ENCODE measurements at regions of chr1 and their contacts with region 1.

Region 1: GRCh38 chr1:167442124-167442848 is 76.0 kb downstream of the CD247 start:
- DNase-seq: peak; percentile 92 to 93
- H3K4me3 ChIP-seq: no peak overlapping the region
- H3K4me3 Mint-ChIP-seq: no peak overlapping the region
- H3K27ac Mint-ChIP-seq: no peak overlapping the region
- H3K4me1 ChIP-seq: no peaks in the 10 kb centered on the region
- H3K4me1 Mint-ChIP-seq: no peaks in the 10 kb centered on the region
- H3K27me3 ChIP-seq: no peaks in the 10 kb centered on the region
- H3K27me3 Mint-ChIP-seq: no peaks in the 10 kb centered on the region
- CTCF ChIP-seq: peak; percentile 90 to 94

Region 2: DNA sequence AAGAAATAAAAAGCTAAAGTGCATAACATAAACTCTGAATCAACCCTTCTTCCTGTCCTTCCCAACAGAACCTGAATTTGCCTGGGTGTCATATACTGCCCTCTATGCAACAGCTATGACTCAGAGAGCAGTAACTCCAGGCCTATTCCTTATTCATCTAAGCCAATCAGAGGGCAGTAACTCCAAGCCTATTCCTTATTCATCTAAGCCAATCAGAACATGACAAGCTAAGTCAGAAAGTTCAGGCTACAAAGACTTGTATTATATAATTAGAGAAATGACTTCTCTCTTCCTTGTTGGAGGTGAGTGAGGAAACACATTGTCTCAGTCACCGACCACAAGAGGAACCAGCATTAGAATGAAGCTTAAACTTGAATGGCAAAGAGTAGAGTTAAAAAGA is 540.0 kb before region 1 on chr1:
- CTCF ChIA-PET with region 1: no interaction called
- POLR2A ChIA-PET with region 1: no interaction called
- intact Hi-C with region 1: loop called (anchors 5 kb)
- DNase-seq: no peak
- H3K4me3 ChIP-seq: no peak overlapping the region
- H3K4me3 Mint-ChIP-seq: no peak overlapping the region
- H3K27ac Mint-ChIP-seq: no peak overlapping the region
- H3K4me1 ChIP-seq: no peaks in the 10 kb centered on the region
- H3K4me1 Mint-ChIP-seq: no peaks in the 10 kb centered on the region
- H3K27me3 ChIP-seq: no peaks in the 10 kb centered on the region
- H3K27me3 Mint-ChIP-seq: peaks cover 6% of the 10 kb centered on the region
- CTCF ChIP-seq: no peak

Region 3: GRCh38 chr1:167409183-167409582 is 33.1 kb before region 1 on chr1:
- CTCF ChIA-PET with region 1: interaction called, 3 read pairs
- POLR2A ChIA-PET with region 1: no interaction called
- intact Hi-C with region 1: loop called (anchors 2 kb)
- DNase-seq: peak in 1 of 2 experiments; percentile 35
- H3K4me3 ChIP-seq: no peak overlapping the region
- H3K4me3 Mint-ChIP-seq: no peak overlapping the region
- H3K27ac Mint-ChIP-seq: no peak overlapping the region
- H3K4me1 ChIP-seq: no peaks in the 10 kb centered on the region
- H3K4me1 Mint-ChIP-seq: no peaks in the 10 kb centered on the region
- H3K27me3 ChIP-seq: no peaks in the 10 kb centered on the region
- H3K27me3 Mint-ChIP-seq: no peaks in the 10 kb centered on the region
- CTCF ChIP-seq: peak in 1 of 2 experiments; percentile 29

Region 4: GRCh38 chr1:168312718-168313604 is 870.7 kb after region 1 on chr1:
- CTCF ChIA-PET with region 1: no interaction called
- POLR2A ChIA-PET with region 1: no interaction called
- intact Hi-C with region 1: no loop called
- DNase-seq: no peak
- H3K4me3 ChIP-seq: no peak overlapping the region
- H3K4me3 Mint-ChIP-seq: no peak overlapping the region
- H3K27ac Mint-ChIP-seq: no peak overlapping the region
- H3K4me1 ChIP-seq: no peaks in the 10 kb centered on the region
- H3K4me1 Mint-ChIP-seq: no peaks in the 10 kb centered on the region
- H3K27me3 ChIP-seq: no peaks in the 10 kb centered on the region
- H3K27me3 Mint-ChIP-seq: no peaks in the 10 kb centered on the region
- CTCF ChIP-seq: no peak